PC-3 (cell line): ENCODE measurements at regions of chr16 and their contacts with region 1.

Region 1: GRCh38 chr16:84738255-84739038 is 38.6 kb downstream of the USP10 start:
- DNase-seq: peak; percentile 80
- ATAC-seq: peak; percentile 63
- H3K4me3 ChIP-seq: no peak overlapping the region
- H3K27ac ChIP-seq: no peak overlapping the region
- H3K4me1 ChIP-seq: peaks cover 63% of the 10 kb centered on the region
- H3K27me3 ChIP-seq: no peaks in the 10 kb centered on the region
- CTCF ChIP-seq: peak; percentile 85

Region 2: DNA sequence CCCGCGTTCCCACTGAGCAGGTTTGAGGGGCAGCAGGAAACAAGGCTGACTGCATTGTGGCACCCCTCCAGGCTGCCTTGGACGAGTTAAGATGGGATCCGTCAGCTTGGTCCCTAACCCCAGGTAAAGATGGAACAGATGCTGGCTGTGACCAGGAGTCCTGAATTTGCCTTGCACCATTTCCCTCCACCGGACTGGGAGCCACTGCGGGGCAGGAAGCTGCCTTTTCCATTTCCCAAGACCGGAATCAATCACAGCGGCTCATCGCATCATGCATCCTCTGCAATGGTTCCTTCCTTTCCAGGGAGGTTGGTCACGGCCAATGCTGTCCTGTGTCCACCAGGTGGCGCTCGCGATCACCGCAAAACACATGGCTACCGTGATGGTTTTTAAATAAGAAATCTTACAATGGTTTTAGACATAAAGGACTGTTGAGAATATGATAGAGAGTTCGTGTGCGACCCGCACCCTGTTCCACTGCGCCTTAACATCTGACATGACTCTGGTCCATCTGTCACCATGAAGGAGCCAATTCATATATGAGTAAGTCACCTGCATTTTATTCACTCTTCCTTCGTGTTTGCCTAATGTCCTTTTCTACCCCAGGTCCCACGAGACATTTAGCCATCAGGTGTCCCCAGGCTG is 227.1 kb before region 1 on chr16:
- CTCF ChIA-PET with region 1: no interaction called
- POLR2A ChIA-PET with region 1: interaction called, 14 read pairs
- intact Hi-C with region 1: loop called (anchors 1 kb)
- DNase-seq: peak; percentile 87
- ATAC-seq: peak; percentile 89
- H3K4me3 ChIP-seq: peak overlapping the region; percentile 41; the same call in 1 of the 2 replicates
- H3K27ac ChIP-seq: no peak overlapping the region
- H3K4me1 ChIP-seq: peaks cover 5% of the 10 kb centered on the region
- H3K27me3 ChIP-seq: no peaks in the 10 kb centered on the region
- CTCF ChIP-seq: peak; percentile 91